HepG2 (cell line): ENCODE measurements at regions of chr14 and their contacts with region 1.

Region 1: DNA sequence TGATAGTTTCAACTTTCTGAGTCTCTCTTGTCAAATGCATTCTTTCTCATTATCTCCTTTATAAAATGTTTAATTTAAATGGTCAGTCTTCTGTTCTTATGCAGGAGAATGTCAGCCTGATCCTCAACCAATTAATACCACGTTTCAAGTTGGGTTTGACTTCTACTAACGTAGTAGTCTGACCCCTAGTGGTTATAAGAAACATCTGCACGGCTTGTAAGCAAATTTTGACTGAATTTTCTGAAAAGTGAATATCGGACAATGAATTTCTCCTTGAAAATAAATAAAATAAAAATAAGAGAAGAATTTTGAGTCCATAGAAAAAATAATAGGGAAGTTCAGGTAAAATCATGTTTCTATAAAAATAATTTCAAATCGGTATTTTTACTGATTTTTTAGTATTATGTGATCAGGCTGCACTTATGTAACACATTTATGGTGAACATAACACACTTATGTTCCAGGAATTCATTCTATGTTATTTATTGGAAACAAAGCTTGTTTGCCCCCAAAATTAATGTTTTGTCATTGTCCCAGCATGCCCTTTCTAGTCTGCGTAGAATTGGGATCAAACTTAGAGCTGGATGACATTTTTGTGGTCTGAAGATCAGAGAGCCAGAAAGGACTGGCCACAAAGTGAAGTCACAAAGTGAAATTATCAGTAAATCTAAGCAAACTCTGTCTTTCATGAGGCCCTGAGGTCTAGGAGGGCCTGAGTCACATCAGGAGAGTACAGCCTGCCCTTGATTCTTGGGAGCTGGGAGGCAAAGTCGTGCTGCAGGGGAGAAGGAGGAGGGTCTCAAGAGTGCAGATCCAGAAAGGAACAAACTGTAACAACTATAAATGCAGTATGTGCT is 101.2 kb upstream of the STXBP6 start:
- DNase-seq: peak; percentile 72
- ATAC-seq: peak; percentile 77
- H3K4me3 ChIP-seq: no peak overlapping the region
- H3K27ac ChIP-seq: no peak overlapping the region
- H3K4me1 ChIP-seq: no peaks in the 10 kb centered on the region
- H3K27me3 ChIP-seq: no peaks in the 10 kb centered on the region
- CTCF ChIP-seq: peak; percentile 86
- EP300 ChIP-seq: no peak
- POLR2A ChIP-seq: no peak
- RAD21 ChIP-seq: no peak; the same call in 1 of the 2 replicates

Region 2: DNA sequence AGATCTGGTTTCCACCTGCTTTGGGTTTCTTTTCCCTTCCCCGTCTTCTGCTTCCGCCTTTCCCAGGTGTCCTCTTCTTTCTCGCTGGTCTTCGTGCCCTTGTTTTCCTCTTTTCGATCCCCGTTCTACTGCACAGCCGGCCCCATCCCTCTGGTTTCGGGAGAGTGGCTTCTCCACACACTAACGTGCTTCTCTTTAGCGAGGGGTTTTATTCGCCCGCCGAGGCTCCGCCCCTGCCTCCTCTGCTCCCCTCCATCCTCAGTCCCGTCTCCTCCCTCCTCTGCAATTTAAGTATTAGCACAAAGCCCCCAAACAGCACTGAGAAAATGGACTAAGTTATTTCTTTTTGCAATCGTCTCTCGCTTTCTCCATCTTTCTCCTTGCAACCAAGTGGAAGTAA is 1967.7 kb before region 1 on chr14 and contains the start of gene SLC7A8:
- CTCF ChIA-PET with region 1: no interaction called
- POLR2A ChIA-PET with region 1: no interaction called
- in situ Hi-C with region 1: no loop called
- intact Hi-C with region 1: no loop called
- DNase-seq: no peak
- ATAC-seq: peak; percentile 18; the same call in 2 of the 3 replicates
- H3K4me3 ChIP-seq: no peak within 1 kb of the TSS; a peak in 1 of 6 replicates
- H3K27ac ChIP-seq: no peak within 1 kb of the TSS
- H3K4me1 ChIP-seq: peaks cover 12% of the 10 kb centered on the region
- H3K27me3 ChIP-seq: peaks cover 7 to 57% of the 10 kb centered on the region in 2 experiments; a peak in 4 of 5 replicates
- CTCF ChIP-seq: no peak
- EP300 ChIP-seq: no peak
- POLR2A ChIP-seq: no peak
- RAD21 ChIP-seq: no peak
- total RNA-seq, gene SLC7A8: not detected in 2 replicates

Region 3: DNA sequence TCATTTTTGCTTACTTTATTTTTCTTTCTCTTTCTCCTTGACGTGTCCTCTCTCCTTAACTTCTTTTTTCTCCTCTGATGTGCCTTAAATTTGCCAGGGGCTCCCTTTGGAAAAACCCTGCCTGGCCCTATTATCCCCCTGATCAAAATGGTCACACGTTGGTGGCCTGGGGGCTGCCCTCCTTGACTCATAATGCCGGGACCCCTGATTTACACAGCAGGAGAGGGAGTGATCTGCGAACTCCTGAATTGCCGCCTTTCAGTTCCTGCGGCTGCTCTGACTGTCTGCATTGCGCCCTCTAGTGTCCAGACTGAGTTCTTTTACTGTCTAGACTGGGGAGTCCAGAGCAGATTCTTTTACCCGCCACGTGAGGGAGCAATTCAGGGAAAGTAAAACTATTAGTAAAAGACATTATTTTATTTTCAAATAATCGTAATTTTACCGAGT is 472.3 kb before region 1 on chr14:
- CTCF ChIA-PET with region 1: interaction called, 11 read pairs
- POLR2A ChIA-PET with region 1: no interaction called
- in situ Hi-C with region 1: no loop called
- intact Hi-C with region 1: loop called (anchors 1 kb)
- DNase-seq: peak; percentile 98
- ATAC-seq: peak; percentile 100
- H3K4me3 ChIP-seq: peak overlapping the region; percentile 2 to 55 (median 36)
- H3K27ac ChIP-seq: no peak overlapping the region
- H3K4me1 ChIP-seq: peaks cover 6% of the 10 kb centered on the region
- H3K27me3 ChIP-seq: peaks cover 0 to 9% of the 10 kb centered on the region in 2 experiments
- CTCF ChIP-seq: peak; percentile 99
- EP300 ChIP-seq: no peak
- POLR2A ChIP-seq: no peak
- RAD21 ChIP-seq: no peak; the same call in 1 of the 2 replicates

Region 4: DNA sequence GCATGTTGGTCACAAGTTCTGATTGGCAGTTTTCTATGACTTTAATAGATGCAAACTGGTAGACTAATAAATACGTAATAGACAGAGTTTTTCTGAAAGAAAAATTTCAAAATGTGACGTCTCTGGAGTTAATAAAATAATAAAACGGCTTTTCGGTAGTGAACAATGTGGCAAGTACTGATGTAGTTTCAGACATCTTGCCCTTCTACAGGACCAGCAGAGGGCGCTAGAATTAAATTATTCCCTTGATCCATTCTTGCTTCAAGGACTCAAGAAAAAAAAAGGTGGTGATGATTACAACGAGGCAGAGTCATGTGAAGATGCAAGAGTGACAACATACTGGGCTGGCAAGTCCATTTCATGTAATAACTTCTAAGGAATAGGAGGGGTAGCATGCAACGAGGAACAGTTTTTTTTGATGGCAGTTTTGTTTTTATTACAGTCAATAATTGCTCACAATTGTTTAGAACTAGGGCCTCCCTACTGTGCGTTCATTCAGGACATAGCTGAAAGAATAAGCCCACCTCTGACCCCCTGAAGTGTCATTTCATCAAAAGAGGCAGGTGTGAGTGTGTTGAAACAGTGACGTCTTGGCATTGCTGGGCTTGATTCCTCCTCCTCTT is 416.2 kb before region 1 on chr14:
- CTCF ChIA-PET with region 1: interaction called, 80 read pairs
- POLR2A ChIA-PET with region 1: no interaction called
- in situ Hi-C with region 1: loop called (anchors 10 kb)
- intact Hi-C with region 1: loop called (anchors 1 kb)
- DNase-seq: peak; percentile 86
- ATAC-seq: peak; percentile 95
- H3K4me3 ChIP-seq: no peak overlapping the region
- H3K27ac ChIP-seq: no peak overlapping the region
- H3K4me1 ChIP-seq: no peaks in the 10 kb centered on the region
- H3K27me3 ChIP-seq: no peaks in the 10 kb centered on the region
- CTCF ChIP-seq: peak; percentile 91
- EP300 ChIP-seq: no peak
- POLR2A ChIP-seq: no peak
- RAD21 ChIP-seq: peak; percentile 88

Region 5: DNA sequence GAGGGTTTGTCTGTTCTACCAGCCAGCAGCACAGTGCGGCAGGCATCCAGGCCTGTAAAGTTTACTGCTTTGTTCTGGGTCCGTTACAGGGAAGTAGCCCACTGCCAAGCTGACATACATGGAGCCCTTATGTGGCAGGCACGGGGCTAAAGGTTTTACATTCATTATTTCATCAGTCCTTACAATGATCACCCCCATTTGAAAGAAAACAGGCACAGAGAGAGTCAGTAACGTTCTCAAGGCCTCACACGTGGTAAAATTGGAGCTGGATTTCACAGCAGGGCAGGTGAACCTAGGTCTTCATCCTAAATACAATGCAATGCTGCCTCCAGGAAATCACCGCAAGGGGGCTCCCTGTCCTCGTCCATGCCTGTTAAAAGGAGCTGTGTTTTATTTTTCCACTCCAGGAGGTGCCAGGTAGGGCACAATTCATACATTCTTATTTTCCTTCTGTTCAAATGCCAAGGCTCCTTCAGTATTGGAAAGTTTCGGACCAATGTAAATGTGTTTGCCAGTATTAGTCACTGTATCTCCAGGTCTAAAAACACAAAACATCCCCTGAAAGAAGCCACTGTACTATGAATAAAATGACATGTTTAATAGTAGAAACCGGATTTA is 345.0 kb before region 1 on chr14:
- CTCF ChIA-PET with region 1: interaction called, 19 read pairs
- POLR2A ChIA-PET with region 1: no interaction called
- in situ Hi-C with region 1: no loop called
- intact Hi-C with region 1: loop called (anchors 1 kb)
- DNase-seq: peak; percentile 88
- ATAC-seq: peak; percentile 81
- H3K4me3 ChIP-seq: no peak overlapping the region
- H3K27ac ChIP-seq: no peak overlapping the region
- H3K4me1 ChIP-seq: peaks cover 58% of the 10 kb centered on the region
- H3K27me3 ChIP-seq: no peaks in the 10 kb centered on the region
- CTCF ChIP-seq: peak; percentile 99
- EP300 ChIP-seq: no peak
- POLR2A ChIP-seq: no peak
- RAD21 ChIP-seq: peak; percentile 99

Region 6: GRCh38 chr14:25197885-25198284 is 46.7 kb after region 1 on chr14:
- CTCF ChIA-PET with region 1: no interaction called
- POLR2A ChIA-PET with region 1: no interaction called
- in situ Hi-C with region 1: no loop called
- intact Hi-C with region 1: no loop called
- DNase-seq: peak; percentile 87
- ATAC-seq: peak; percentile 98
- H3K4me3 ChIP-seq: no peak overlapping the region
- H3K27ac ChIP-seq: no peak overlapping the region
- H3K4me1 ChIP-seq: peaks cover 18% of the 10 kb centered on the region
- H3K27me3 ChIP-seq: no peaks in the 10 kb centered on the region
- CTCF ChIP-seq: no peak
- EP300 ChIP-seq: peak; percentile 77 to 81; a peak in 3 of 4 replicates
- POLR2A ChIP-seq: no peak
- RAD21 ChIP-seq: no peak

Region 7: GRCh38 chr14:25237845-25238244 is 86.7 kb after region 1 on chr14:
- CTCF ChIA-PET with region 1: no interaction called
- POLR2A ChIA-PET with region 1: no interaction called
- in situ Hi-C with region 1: no loop called
- intact Hi-C with region 1: loop called (anchors 1 kb)
- DNase-seq: peak; percentile 59
- ATAC-seq: peak; percentile 96
- H3K4me3 ChIP-seq: no peak overlapping the region
- H3K27ac ChIP-seq: no peak overlapping the region
- H3K4me1 ChIP-seq: no peaks in the 10 kb centered on the region
- H3K27me3 ChIP-seq: no peaks in the 10 kb centered on the region
- CTCF ChIP-seq: peak; percentile 75
- EP300 ChIP-seq: no peak
- POLR2A ChIP-seq: no peak
- RAD21 ChIP-seq: no peak; the same call in 1 of the 2 replicates